ENCODE measurements at regions of chr11 and their contacts with region 1.

Region 1: GRCh38 chr11:88139865-88140264 is 35.4 kb downstream of the RAB38 start:
- DNase-seq: no peak
- H3K4me3 ChIP-seq: no peak overlapping the region
- H3K27ac ChIP-seq: no peak overlapping the region
- H3K4me1 ChIP-seq: no peaks in the 10 kb centered on the region
- H3K27me3 ChIP-seq: no peaks in the 10 kb centered on the region
- CTCF ChIP-seq: no peak
- POLR2A ChIP-seq: no peak

Region 2: DNA sequence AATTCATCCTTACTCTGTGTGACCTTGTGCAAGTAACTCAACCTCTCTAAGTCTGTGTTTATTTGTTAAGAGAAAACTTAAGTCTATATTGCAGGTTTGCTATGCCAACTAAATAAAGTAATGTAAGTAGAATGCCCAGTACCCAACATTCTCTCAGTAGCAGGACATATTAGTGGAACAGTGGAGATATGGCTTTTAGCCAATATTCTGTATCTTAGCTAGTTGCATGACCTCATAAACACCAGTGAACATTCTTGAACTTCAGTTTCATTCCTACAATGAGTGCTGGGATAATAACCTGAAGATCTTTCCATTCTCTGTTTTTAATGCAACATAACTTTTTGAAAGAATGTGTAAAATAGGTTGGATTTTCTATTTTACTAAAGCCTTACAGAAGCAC is 41.6 kb before region 1 on chr11:
- CTCF ChIA-PET with region 1: no interaction called
- POLR2A ChIA-PET with region 1: no interaction called
- dilution Hi-C with region 1: no loop called
- intact Hi-C with region 1: loop called (anchors 5 kb)
- DNase-seq: no peak
- H3K4me3 ChIP-seq: no peak overlapping the region
- H3K27ac ChIP-seq: no peak overlapping the region
- H3K4me1 ChIP-seq: no peaks in the 10 kb centered on the region
- H3K27me3 ChIP-seq: peaks cover 0 to 1% of the 10 kb centered on the region in 2 experiments
- CTCF ChIP-seq: no peak
- POLR2A ChIP-seq: no peak